Spleen (tissue), 13 donors: ENCODE measurements at regions of chr13 and their contacts with region 1.

Region 1: DNA sequence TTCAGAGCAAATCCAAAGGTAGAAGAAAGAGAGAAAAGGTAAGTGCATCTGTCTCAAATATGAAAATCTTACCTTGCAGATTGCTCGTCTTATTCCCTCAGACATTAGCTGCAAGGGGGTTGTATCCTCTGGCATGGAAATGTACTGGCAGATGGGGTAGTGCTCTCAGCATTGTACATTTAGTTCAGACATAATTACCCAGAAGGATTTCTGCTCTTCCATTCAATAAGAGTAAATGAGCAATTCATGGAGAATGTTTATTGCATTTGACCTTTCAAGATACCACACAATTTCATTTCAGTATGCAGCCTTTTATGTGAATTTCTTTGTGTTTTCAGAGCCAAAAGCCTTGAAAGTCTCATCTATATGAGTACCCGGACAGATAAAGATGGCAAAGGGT is 63.8 kb downstream of the SCEL start:
- DNase-seq: no peak
- H3K4me3 ChIP-seq: no peak overlapping the region
- H3K27ac ChIP-seq: no peak overlapping the region
- H3K4me1 ChIP-seq: no peaks in the 10 kb centered on the region
- H3K27me3 ChIP-seq: no peaks in the 10 kb centered on the region
- CTCF ChIP-seq: no peak
- POLR2A ChIP-seq: no peak

Region 2: GRCh38 chr13:77715233-77715891 is 116.0 kb after region 1 on chr13:
- intact Hi-C with region 1: no loop called
- DNase-seq: no peak
- H3K4me3 ChIP-seq: no peak overlapping the region
- H3K27ac ChIP-seq: no peak overlapping the region
- H3K4me1 ChIP-seq: peaks cover 0 to 6% (median 0%) of the 10 kb centered on the region in 6 donors
- H3K27me3 ChIP-seq: no peaks in the 10 kb centered on the region
- CTCF ChIP-seq: no peak
- POLR2A ChIP-seq: no peak

Region 3: DNA sequence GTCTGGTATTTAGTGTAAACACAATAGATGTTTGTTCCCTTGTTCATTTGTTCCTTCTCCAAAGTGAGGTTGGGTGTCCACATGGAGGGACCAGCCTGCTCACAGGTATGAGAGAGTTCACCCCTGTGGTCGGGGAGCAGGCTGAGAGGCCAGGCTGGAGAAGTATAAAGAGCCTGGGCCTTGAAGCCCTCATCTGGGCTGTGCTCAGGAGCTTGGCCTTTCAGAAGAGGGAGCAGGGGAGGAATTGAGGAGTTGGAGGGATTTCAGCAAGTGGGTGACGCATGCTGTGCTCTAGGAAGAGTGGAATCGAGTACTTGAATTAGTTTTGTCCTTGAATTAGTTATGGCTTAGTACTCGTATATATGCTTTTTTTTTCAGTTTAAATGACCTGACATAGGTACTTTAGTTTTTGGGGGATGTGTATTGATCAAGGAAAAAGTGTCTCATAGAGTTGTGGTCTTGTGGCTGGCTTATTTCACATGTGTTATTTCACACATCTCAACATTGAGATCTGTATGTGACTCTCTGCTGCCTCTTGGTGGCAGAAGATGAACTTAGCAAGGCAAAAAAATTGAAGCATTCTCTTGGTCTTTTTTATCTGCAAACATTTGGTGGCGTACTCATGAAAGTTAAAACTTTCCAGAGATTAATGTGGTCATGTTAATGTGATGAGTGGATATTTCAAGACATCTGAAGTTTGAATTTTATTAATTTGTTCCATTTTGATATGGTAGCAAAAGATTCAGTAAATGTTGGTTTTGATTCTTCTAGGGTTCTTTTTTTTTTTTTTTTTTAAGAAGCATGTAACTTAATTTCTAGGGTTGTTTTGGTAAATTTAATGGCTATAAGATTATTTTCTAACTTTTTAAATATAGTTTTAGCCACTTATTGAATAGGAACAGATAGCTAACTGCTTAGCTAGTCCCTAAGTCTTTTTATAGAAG is 152.4 kb after region 1 on chr13:
- intact Hi-C with region 1: loop called (anchors 5 kb)
- DNase-seq: no peak
- H3K4me3 ChIP-seq: no peak overlapping the region
- H3K27ac ChIP-seq: no peak overlapping the region
- H3K4me1 ChIP-seq: peaks cover 0 to 8% (median 3%) of the 10 kb centered on the region in 6 donors
- H3K27me3 ChIP-seq: no peaks in the 10 kb centered on the region
- CTCF ChIP-seq: peak; percentile 55 to 81 (median 72)
- POLR2A ChIP-seq: no peak

Region 4: DNA sequence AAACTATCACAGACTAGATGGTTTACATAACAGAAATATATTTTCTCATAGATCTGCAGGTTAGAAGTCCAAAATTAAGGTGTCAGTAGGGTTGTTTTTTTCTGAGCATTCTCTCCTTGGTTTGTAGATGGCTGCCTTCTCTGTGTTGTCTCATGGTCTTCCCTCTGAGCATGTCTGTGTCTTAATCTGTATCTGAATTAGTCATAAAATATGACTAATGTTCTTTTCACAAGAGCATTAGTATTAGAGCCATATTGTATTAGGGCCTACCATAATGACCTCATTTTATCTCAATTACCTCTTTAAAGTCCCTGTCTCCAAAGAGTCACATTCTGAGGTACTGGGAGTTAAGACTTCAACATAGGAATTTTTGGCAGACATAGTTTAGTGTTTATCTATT is 1136.8 kb after region 1 on chr13:
- intact Hi-C with region 1: no loop called
- DNase-seq: no peak
- H3K4me3 ChIP-seq: no peak overlapping the region
- H3K27ac ChIP-seq: no peak overlapping the region
- H3K4me1 ChIP-seq: no peaks in the 10 kb centered on the region
- H3K27me3 ChIP-seq: no peaks in the 10 kb centered on the region
- CTCF ChIP-seq: no peak
- POLR2A ChIP-seq: no peak